ENCODE measurements at regions of chr17 and their contacts with region 1.

Region 1: DNA sequence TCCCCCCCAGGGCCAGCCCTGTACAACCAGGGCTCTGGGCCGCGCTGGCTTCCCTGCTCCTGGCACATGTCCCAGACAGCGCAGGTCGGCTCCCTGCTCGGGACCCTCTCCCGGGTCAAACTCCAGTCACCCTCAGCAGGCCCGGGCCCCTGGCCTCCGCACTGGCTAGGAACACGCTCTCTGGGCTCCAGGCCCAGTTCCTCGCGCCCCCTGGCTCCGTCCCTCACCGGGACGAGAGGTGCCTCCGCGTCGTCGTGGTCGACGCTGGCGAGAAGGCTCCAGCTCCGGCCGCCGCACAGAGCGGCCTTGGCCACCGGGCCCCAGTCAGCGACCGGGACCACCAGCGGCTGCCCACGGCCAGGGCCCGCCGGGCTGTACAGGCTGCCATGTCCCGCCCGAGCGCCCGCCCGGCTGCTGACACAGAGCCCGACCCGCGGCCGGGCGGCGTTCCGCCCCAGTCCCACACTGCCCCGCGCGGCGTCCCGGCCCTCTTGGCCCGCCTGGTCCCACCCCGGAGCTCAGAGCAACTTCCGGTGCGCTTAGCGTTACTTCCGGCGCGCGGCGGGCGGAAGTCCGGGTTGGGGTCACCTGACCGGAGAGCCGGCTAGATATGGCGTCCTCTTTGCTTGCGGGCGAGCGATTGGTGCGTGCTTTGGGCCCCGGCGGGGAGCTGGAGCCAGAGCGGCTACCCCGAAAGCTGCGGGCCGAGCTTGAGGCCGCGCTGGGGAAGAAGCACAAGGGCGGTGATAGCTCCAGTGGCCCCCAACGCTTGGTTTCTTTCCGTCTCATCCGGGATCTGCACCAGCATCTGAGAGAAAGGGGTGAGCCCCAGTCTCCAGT is at the start of gene POLDIP2:
- DNase-seq: peak; percentile 92 to 98 (median 94)
- H3K4me3 ChIP-seq: peak within 1 kb of the TSS; percentile 72 to 100 (median 98)
- H3K27ac ChIP-seq: peak within 1 kb of the TSS in 58 of 59 donors; percentile 3 to 94 (median 82)
- H3K27me3 ChIP-seq: no peaks in the 10 kb centered on the region
- CTCF ChIP-seq: peak in 47 of 56 donors; percentile 6 to 64 (median 35)
- total RNA-seq, gene POLDIP2: 49.5 to 88.7 (median 68.8) TPM

Region 2: DNA sequence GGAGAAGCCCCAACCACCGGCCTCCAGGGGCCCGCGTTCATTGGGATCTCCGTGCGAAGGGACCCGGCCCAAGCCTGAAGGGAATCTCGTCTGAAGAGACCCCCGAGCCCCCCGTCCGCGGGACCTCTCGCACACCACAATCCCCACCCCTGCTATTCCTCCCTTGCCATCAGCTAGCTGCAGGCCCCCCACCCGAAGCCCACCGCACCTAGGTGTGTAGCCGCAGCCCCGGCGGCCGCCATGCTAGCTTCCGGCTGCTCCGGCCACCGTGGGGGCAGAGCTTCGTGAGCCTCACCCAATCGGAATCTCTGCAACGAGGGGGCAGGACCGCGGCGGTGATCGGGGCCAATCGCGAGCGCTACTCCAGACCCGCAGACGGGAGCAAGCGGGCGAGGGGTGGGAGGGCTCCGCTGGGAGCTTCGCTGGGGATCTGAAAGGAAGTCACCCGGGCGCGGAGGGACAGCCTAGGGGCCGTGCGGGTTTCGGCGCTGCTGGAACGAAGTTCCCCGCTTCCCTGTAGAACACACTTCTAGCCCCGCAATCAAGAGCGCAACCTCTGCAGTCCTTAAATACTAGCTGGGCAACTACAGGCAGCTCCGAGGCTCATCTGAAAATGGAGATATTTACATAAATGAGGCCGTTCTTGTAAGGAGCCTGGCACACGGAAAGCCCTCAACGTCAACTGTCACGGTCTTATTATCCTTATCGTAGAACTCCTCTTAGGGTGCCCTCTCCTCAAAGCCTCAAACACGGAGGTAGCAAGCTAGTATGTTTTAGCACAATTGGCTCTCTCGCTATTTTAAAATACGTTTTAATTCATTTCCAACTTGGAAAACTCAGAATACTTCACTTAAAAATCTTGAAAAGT is 214.2 kb after region 1 on chr17 and contains the start of gene PIGS:
- intact Hi-C with region 1: loop called in 1 of 2 experiments (anchors 10 kb)
- DNase-seq: peak; percentile 92 to 98 (median 97)
- H3K4me3 ChIP-seq: peak within 1 kb of the TSS; percentile 63 to 100 (median 96)
- H3K27ac ChIP-seq: peak within 1 kb of the TSS; percentile 33 to 94 (median 86)
- H3K27me3 ChIP-seq: no peaks in the 10 kb centered on the region
- CTCF ChIP-seq: peak in 40 of 56 donors; percentile 7 to 57 (median 26)
- total RNA-seq, gene PIGS: 35.5 to 70.3 (median 50.3) TPM